Sigmoid colon (tissue), 7 donors: ENCODE measurements at regions of chr6 and their contacts with region 1.

Region 1: DNA sequence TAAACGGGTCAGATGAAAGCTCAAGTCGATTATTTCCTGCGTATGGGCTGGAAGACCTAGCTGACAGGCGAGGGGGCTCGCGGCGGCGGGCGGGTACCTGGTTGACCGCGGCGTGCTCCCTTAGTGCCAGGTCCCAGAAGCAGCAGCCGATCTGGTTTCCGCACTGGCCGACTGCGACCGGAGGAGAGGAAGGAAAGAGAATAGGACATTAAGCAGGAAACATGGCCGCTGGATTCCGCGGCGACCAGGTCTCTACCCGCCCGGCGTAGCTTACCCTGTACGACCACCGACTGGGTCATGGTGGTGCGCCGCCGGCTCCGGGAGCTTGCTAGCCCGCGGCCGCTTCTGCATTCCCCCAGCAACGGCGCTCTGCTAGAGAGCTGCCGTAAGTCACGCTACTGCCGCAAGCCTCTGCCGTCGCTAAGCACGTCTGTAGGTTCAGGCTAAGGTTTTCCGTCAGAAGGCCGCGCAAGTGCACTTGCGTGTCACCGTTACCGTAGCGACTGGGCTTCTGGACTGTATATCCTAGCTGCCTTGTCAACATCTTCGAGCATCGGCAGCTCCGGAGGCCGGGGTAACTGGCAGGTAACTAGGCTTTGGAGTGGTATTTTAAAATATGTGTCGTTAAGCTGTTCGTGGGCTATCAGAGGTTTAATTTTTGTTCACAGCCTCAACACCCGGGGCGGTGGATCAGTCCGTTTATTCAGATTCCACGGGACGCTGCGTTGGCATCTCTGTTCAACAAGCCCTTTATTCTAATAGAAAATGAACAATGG is at the starts of genes FAM229B and TUBE1:
- DNase-seq: peak; percentile 96
- H3K4me3 ChIP-seq: peak within 1 kb of the TSS; percentile 64 to 87 (median 78)
- H3K27ac ChIP-seq: peak within 1 kb of the TSS; percentile 87 to 93 (median 88)
- H3K4me1 ChIP-seq: peaks cover 0 to 21% (median 9%) of the 10 kb centered on the region in 4 donors
- H3K27me3 ChIP-seq: no peaks in the 10 kb centered on the region
- CTCF ChIP-seq: no peak
- EP300 ChIP-seq: peak in 2 of 4 donors; percentile 32 to 52
- POLR2A ChIP-seq: peak; percentile 86 to 94
- total RNA-seq, gene FAM229B: 11.4 to 22.2 (median 16.6) TPM
- total RNA-seq, gene TUBE1: 32.5 to 65.2 (median 48.6) TPM

Region 2: DNA sequence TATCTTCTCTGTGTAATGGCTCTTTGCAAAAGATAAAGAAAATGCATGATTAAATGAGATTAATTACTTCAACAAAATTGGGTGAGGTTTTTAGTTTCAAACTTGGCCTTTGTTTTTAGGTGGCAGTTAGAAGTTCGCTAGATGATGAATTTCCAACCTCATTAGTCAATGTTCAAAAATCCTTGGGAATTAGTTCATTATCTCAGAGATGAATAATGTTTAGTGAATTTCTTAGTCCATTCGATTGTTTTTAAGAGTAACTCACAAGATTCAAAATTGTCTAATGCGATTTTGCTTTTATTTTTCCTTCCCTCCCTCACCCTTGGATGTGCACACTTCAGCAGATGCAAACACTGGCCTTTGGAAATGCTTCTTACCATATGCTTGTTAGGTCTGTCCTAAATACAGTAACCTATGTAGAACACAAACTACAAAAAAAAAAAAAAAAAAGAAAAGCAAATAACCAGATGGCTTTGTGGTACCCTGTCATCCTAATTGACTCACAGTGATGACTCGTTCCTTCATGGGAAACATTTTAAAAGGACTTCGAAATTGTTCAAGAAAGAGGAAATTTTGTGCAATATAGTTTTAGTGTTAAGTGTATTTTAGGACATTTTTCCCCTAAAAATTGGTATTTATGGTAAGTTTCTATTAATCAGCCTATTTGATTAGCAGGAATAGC is 66.7 kb after region 1 on chr6:
- intact Hi-C with region 1: loop called (anchors 5 kb)
- DNase-seq: no peak
- H3K4me3 ChIP-seq: no peak overlapping the region
- H3K27ac ChIP-seq: peak overlapping the region; percentile 40 to 74 (median 66)
- H3K4me1 ChIP-seq: peaks cover 0 to 42% (median 36%) of the 10 kb centered on the region in 4 donors
- H3K27me3 ChIP-seq: no peaks in the 10 kb centered on the region
- CTCF ChIP-seq: no peak
- EP300 ChIP-seq: no peak
- POLR2A ChIP-seq: no peak

Region 3: GRCh38 chr6:112169541-112169940 is 82.2 kb after region 1 on chr6:
- intact Hi-C with region 1: no loop called
- DNase-seq: no peak
- H3K4me3 ChIP-seq: no peak overlapping the region
- H3K27ac ChIP-seq: no peak overlapping the region
- H3K4me1 ChIP-seq: no peaks in the 10 kb centered on the region
- H3K27me3 ChIP-seq: no peaks in the 10 kb centered on the region
- CTCF ChIP-seq: no peak
- EP300 ChIP-seq: no peak
- POLR2A ChIP-seq: no peak

Region 4: GRCh38 chr6:112311950-112312547 is 224.7 kb after region 1 on chr6:
- intact Hi-C with region 1: loop called (anchors 10 kb)
- DNase-seq: no peak
- H3K4me3 ChIP-seq: no peak overlapping the region
- H3K27ac ChIP-seq: peak overlapping the region in 1 of 4 donors; percentile 7
- H3K4me1 ChIP-seq: peaks cover 0 to 17% (median 4%) of the 10 kb centered on the region in 4 donors
- H3K27me3 ChIP-seq: no peaks in the 10 kb centered on the region
- CTCF ChIP-seq: peak; percentile 40 to 71 (median 68)
- EP300 ChIP-seq: no peak
- POLR2A ChIP-seq: no peak